ENCODE measurements at regions of chr6 and their contacts with region 1.

Region 1: GRCh38 chr6:30646458-30647241 is at the start of gene C6orf136:
- DNase-seq: peak; percentile 84 to 99 (median 94)
- ATAC-seq: peak; percentile 79
- H3K4me3 ChIP-seq: peak within 1 kb of the TSS; percentile 85
- H3K4me3 Mint-ChIP-seq: peak within 1 kb of the TSS; percentile 93
- H3K27ac ChIP-seq: peak within 1 kb of the TSS; percentile 86 to 91
- H3K27ac Mint-ChIP-seq: peak within 1 kb of the TSS; percentile 89
- H3K4me1 ChIP-seq: peaks cover 23% of the 10 kb centered on the region
- H3K4me1 Mint-ChIP-seq: peaks cover 23% of the 10 kb centered on the region
- H3K27me3 ChIP-seq: no peaks in the 10 kb centered on the region
- H3K27me3 Mint-ChIP-seq: no peaks in the 10 kb centered on the region
- CTCF ChIP-seq: no peak
- total RNA-seq, gene C6orf136: 20.3 to 21.7 TPM

Region 2: DNA sequence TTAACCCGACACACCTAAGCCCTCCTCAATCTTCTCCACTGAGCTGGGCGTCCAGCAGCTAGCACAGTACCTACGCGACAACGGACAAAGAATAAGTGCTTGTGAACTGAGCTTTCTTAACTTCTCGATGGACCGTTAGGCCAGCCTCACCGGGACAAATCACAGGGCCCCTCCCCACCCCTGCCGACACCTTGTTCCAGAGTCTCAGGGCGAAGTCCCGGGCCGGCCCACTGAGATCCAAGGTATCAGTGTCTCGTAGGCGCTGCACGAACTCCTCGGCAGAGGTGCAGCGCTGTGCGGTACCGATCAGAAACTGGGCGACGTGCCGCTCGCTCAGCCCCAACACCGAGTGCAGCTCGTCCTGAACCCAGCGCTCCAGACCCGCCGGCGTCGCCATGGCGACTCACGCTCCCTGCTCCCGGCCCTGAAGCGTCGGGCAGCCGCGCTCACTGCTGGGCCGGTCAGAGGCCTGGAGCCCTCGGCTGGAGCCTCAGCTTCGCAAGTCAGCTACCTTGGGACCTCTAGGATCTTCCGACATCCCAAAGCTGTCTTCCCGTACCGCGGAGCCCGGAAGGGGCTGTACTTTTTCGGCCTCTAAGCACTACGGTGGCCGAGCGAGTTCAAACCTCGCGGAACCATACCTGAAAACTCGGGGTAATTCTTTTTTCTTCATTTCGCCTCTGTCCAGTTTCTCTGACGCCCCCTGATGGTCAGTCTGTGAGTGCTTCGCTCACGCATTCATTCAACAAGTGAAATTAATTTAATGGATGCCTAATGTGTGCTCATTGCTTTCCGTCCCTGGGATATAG is 26.0 kb after region 1 on chr6 and contains the start of gene DHX16:
- CTCF ChIA-PET with region 1: interaction called, 3 read pairs
- POLR2A ChIA-PET with region 1: interaction called, 4 read pairs
- intact Hi-C with region 1: loop called in 1 of 2 experiments (anchors 2 kb)
- DNase-seq: peak; percentile 79 to 95 (median 84)
- ATAC-seq: peak; percentile 76
- H3K4me3 ChIP-seq: peak within 1 kb of the TSS; percentile 98
- H3K4me3 Mint-ChIP-seq: peak within 1 kb of the TSS; percentile 87
- H3K27ac ChIP-seq: peak within 1 kb of the TSS; percentile 49 to 59
- H3K27ac Mint-ChIP-seq: peak within 1 kb of the TSS; percentile 86
- H3K4me1 ChIP-seq: peaks cover 18% of the 10 kb centered on the region
- H3K4me1 Mint-ChIP-seq: peaks cover 49% of the 10 kb centered on the region
- H3K27me3 ChIP-seq: no peaks in the 10 kb centered on the region
- H3K27me3 Mint-ChIP-seq: no peaks in the 10 kb centered on the region
- CTCF ChIP-seq: peak; percentile 69
- total RNA-seq, gene DHX16: 15.9 to 16.1 TPM

Measured in CD4-positive, alpha-beta T cell (primary cell).